Ovary (tissue), 10 donors: ENCODE measurements at regions of chr5 and their contacts with region 1.

Region 1: GRCh38 chr5:74562122-74562521 is 78.4 kb downstream of the ENC1 start:
- DNase-seq: no peak
- H3K4me3 ChIP-seq: no peak overlapping the region
- H3K27ac ChIP-seq: no peak overlapping the region
- H3K4me1 ChIP-seq: no peaks in the 10 kb centered on the region
- H3K27me3 ChIP-seq: no peaks in the 10 kb centered on the region
- CTCF ChIP-seq: no peak
- EP300 ChIP-seq: no peak
- POLR2A ChIP-seq: no peak

Region 2: DNA sequence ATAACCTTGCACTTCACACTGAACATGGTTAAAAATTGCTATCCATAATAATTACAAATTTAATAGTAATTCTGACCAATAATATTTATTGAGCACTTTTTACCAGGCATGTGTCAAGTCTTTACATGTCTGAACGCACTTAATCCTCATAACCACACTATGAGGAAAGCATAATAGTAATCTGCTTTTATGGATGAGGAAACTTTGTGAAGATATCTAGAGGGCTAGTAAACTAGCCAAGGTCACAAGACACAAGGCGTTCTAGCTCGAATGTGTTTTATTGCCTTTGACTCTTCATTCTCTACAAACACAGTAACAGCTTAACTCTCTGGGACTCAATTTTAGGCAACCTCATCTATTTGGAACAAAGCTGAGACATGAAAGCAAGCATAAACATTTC is 731.1 kb before region 1 on chr5:
- intact Hi-C with region 1: loop called in 1 of 4 experiments (anchors 5 kb)
- DNase-seq: no peak
- H3K4me3 ChIP-seq: no peak overlapping the region
- H3K27ac ChIP-seq: peak overlapping the region in 1 of 2 donors; percentile 43
- H3K4me1 ChIP-seq: peaks cover 8% of the 10 kb centered on the region
- H3K27me3 ChIP-seq: peaks cover 2% of the 10 kb centered on the region
- CTCF ChIP-seq: no peak
- EP300 ChIP-seq: no peak
- POLR2A ChIP-seq: no peak

Region 3: DNA sequence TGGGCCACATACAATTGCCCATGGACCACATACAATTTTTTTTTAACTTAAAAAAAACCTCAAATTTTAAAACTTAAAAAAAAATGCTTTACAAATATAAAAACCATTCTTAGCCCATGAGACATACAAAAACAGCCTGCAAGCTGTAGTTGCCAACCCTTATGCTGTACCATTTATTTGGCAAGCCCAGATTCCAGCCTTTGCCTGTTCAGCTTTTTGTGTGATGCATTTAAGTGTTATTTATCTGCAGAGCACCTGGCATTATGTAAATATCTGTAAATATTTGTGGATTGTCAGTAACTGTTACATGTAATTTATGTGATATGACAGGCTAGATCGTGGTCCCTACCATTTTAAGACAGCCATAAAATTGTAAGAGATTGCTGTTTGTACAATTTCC is 155.5 kb after region 1 on chr5:
- intact Hi-C with region 1: no loop called
- DNase-seq: no peak
- H3K4me3 ChIP-seq: no peak overlapping the region
- H3K27ac ChIP-seq: no peak overlapping the region
- H3K4me1 ChIP-seq: no peaks in the 10 kb centered on the region
- H3K27me3 ChIP-seq: no peaks in the 10 kb centered on the region
- CTCF ChIP-seq: no peak
- EP300 ChIP-seq: no peak
- POLR2A ChIP-seq: no peak